PC-9 (cell line): ENCODE measurements at regions of chr9 and their contacts with region 1.

Region 1: GRCh38 chr9:125074976-125075375 is 68.4 kb downstream of the SCAI start:
- DNase-seq: no peak
- H3K4me3 ChIP-seq: no peak overlapping the region
- H3K27ac ChIP-seq: no peak overlapping the region
- H3K4me1 ChIP-seq: no peaks in the 10 kb centered on the region
- H3K27me3 ChIP-seq: no peaks in the 10 kb centered on the region
- CTCF ChIP-seq: no peak

Region 2: GRCh38 chr9:125343518-125344275 is 268.7 kb after region 1 on chr9:
- CTCF ChIA-PET with region 1: no interaction called
- POLR2A ChIA-PET with region 1: interaction called, 22 read pairs
- intact Hi-C with region 1: no loop called
- DNase-seq: peak in 1 of 2 experiments; percentile 64
- H3K4me3 ChIP-seq: no peak overlapping the region
- H3K27ac ChIP-seq: no peak overlapping the region
- H3K4me1 ChIP-seq: peaks cover 16% of the 10 kb centered on the region
- H3K27me3 ChIP-seq: no peaks in the 10 kb centered on the region
- CTCF ChIP-seq: no peak